ENCODE measurements at regions of chr17 and their contacts with region 1.

Region 1: DNA sequence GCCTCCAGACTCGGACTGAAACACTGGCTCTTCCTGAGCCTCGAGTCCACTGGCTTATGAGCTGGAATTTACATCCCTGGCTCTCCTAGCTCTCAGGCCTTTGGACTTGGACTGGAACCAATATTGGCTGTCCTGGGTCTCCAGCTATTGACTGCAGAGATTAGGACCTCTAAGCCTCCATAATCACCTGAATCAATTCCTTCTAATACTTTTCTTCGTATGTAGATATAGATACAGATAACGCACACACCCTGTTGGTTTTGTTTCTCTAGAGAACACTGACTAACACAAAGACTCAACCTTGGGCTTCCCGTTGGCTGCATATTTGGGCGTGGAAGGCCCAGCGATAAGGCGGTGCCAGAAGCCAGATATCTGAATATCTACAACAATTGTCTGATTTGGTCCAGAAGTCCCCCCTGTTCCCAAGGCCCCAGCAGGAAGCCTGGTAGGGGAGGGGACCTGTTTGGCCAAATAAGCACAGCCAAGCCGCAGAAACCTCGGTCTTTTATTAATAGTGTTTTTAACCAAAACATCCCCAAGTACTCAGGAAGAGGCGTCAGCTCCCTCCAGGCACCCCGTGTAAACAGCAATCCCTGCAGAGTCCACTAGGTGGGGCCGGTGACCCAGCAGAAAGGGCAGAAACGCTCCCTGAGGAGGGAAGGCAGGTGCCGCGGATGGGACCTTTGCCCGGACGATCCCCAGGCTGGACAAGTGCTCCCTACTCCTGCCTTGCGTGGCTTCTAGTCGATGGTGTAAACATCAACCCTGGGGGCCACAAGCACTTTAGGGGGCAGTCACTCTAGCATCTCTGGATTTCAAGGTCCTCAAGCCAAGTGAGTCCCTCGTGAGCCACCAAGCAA is 57.0 kb downstream of the ABR start:
- DNase-seq: peak; percentile 72
- H3K4me3 Mint-ChIP-seq: no peak overlapping the region
- H3K27ac Mint-ChIP-seq: no peak overlapping the region
- H3K4me1 Mint-ChIP-seq: no peaks in the 10 kb centered on the region
- H3K27me3 Mint-ChIP-seq: peaks cover 2% of the 10 kb centered on the region

Region 2: GRCh38 chr17:1186923-1187771 is 64.4 kb after region 1 on chr17:
- intact Hi-C with region 1: loop called (anchors 1 kb)
- DNase-seq: peak; percentile 64
- H3K4me3 Mint-ChIP-seq: no peak overlapping the region
- H3K27ac Mint-ChIP-seq: no peak overlapping the region
- H3K4me1 Mint-ChIP-seq: no peaks in the 10 kb centered on the region
- H3K27me3 Mint-ChIP-seq: peaks cover 5% of the 10 kb centered on the region